ENCODE measurements at regions of chr16 and their contacts with region 1.

Region 1: DNA sequence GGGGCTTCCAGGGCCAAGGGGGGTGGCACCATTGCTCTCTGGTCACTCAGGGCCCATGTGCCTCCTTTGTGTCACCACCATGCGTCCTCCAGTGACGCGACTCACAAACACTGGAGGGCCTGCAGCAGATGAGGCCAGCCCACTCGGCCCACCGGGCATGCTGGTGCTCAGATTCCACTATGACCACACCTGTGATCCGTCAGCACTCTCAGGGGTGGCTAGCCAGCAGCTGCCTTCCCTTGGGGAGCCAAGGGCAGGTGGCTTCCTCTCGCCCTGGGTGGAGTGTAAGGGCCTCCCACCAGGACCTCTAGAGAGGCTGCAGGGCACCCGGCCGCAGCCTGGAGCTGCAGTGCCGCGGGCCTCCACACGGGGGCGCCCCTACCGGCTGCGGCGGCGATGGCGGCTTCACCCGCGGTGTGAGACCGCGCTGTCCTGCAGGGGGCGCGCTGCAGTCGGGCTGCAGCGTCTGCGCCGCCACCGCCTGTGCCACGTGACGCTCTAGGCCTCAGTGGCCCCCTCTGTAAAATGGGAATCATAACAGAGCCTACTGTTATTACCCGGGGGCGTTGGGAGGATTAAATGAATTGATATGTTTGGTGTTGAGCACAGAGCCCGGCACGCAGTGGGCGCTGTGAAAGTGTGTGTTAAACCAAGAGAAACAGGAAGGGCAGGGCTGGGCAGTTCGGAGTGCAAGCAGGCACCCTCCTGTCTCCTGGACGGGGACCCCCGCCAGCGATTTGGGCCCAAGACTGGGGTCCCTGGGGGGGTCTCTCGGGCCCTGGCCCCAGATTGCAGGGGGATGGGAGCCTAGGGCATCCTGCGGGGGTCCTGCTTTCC is 192.4 kb upstream of the GSE1 start:
- DNase-seq: peak; percentile 50 to 89 (median 71)
- ATAC-seq: peak; percentile 86
- H3K4me3 ChIP-seq: no peak overlapping the region
- H3K4me3 Mint-ChIP-seq: no peak overlapping the region
- H3K27ac ChIP-seq: no peak overlapping the region
- H3K27ac Mint-ChIP-seq: no peak overlapping the region
- H3K4me1 ChIP-seq: peaks cover 15% of the 10 kb centered on the region
- H3K4me1 Mint-ChIP-seq: no peaks in the 10 kb centered on the region
- H3K27me3 ChIP-seq: no peaks in the 10 kb centered on the region
- H3K27me3 Mint-ChIP-seq: no peaks in the 10 kb centered on the region
- CTCF ChIP-seq: peak; percentile 100

Region 2: GRCh38 chr16:85448557-85449197 is 28.0 kb after region 1 on chr16:
- CTCF ChIA-PET with region 1: no interaction called
- POLR2A ChIA-PET with region 1: no interaction called
- intact Hi-C with region 1: loop called in 1 of 2 experiments (anchors 1 kb)
- DNase-seq: peak; percentile 30 to 76 (median 56)
- ATAC-seq: peak; percentile 82
- H3K4me3 ChIP-seq: peak overlapping the region; percentile 19
- H3K4me3 Mint-ChIP-seq: peak overlapping the region; percentile 44
- H3K27ac ChIP-seq: peak overlapping the region; percentile 34 to 62
- H3K27ac Mint-ChIP-seq: peak overlapping the region; percentile 87
- H3K4me1 ChIP-seq: peaks cover 50% of the 10 kb centered on the region
- H3K4me1 Mint-ChIP-seq: peaks cover 48% of the 10 kb centered on the region
- H3K27me3 ChIP-seq: no peaks in the 10 kb centered on the region
- H3K27me3 Mint-ChIP-seq: no peaks in the 10 kb centered on the region
- CTCF ChIP-seq: no peak

Region 3: DNA sequence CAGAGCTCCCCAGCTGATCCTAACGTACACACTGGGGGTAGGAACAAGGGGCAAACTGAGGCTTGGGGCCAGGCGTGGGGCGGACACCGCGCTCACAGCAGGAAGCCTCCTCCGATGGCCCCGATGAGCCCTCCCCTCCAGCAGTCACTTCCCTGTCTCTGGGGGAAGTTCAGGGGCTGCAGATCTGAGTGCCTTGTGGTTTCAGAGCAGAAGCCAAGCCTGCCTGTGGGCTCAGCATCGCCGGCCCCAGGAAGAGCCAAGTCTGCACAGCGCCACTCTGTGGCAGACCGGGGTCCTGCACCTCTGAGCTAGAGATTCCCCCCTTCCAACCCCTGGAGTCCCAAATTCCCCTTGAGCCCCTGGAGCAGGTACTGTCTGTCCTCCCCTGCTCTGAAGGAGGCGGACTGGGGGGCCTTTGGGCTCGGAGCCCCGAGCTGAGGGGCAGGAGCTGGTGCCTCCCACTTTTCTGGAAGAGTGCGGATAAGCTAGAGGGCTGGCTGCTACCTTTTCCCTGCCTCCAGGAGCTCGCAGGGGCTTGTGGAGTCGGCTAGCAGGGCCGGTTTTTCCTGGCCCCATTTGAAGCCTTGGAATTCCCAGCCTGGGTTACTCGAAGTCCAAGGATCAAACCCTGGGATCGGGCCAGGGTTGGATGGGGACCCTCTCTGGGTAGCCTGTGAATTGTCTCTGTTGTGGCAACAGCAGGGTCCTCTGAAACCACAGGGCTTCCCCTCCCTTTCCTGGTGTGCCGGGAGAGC is 195.3 kb after region 1 on chr16:
- CTCF ChIA-PET with region 1: interaction called, 38 read pairs
- POLR2A ChIA-PET with region 1: interaction called, 11 read pairs
- intact Hi-C with region 1: no loop called
- DNase-seq: peak; percentile 60 to 90 (median 70)
- ATAC-seq: peak; percentile 66
- H3K4me3 ChIP-seq: peak overlapping the region; percentile 17
- H3K4me3 Mint-ChIP-seq: peak overlapping the region; percentile 84
- H3K27ac ChIP-seq: no peak overlapping the region
- H3K27ac Mint-ChIP-seq: peak overlapping the region; percentile 46
- H3K4me1 ChIP-seq: peaks cover 59% of the 10 kb centered on the region
- H3K4me1 Mint-ChIP-seq: peaks cover 27% of the 10 kb centered on the region
- H3K27me3 ChIP-seq: peaks cover 6 to 7% of the 10 kb centered on the region in 2 experiments
- H3K27me3 Mint-ChIP-seq: peaks cover 23% of the 10 kb centered on the region
- CTCF ChIP-seq: peak; percentile 75

Measured in CD4-positive, alpha-beta T cell (primary cell).